PC-9 (cell line): ENCODE measurements at regions of chr7 and their contacts with region 1.

Region 1: DNA sequence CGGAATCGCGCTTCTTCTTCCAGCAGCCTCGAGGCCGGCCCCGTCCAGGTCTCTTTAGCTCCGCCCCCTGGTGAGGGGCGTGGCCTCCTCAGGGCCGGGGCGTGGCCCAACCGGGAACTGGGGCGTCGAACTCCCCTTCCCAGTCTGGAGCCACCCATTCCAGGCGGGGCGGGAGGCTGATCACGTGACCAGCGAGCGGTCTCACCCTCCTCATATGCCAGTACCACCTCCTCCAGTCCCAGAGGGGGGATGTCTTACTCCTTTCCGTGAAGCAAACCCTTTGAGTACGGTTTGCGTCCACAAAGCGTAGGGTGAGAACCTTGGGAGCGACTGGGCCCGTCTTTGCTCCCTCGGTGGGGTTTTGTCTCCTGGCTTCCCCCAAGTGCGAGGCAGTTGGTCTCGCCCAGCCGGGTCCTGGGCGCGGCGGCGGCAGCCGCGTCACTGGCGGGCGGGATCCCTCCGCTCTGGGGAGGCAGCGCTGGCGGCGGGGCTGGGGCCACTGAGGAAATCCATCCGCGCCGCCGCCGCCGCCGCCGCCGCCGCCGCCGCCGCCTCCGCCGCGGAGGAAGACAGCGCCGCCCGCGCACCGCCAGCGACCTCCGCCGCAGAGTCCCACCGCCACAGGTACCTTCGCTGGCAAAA is at the start of gene GNB2:
- DNase-seq: peak; percentile 93 to 100
- H3K4me3 ChIP-seq: peak within 1 kb of the TSS; percentile 99
- H3K27ac ChIP-seq: peak within 1 kb of the TSS; percentile 75
- H3K4me1 ChIP-seq: no peaks in the 10 kb centered on the region; the same call in 1 of the 2 replicates
- H3K27me3 ChIP-seq: no peaks in the 10 kb centered on the region
- CTCF ChIP-seq: no peak
- total RNA-seq, gene GNB2: 299 and 326 TPM in 2 replicates

Region 2: DNA sequence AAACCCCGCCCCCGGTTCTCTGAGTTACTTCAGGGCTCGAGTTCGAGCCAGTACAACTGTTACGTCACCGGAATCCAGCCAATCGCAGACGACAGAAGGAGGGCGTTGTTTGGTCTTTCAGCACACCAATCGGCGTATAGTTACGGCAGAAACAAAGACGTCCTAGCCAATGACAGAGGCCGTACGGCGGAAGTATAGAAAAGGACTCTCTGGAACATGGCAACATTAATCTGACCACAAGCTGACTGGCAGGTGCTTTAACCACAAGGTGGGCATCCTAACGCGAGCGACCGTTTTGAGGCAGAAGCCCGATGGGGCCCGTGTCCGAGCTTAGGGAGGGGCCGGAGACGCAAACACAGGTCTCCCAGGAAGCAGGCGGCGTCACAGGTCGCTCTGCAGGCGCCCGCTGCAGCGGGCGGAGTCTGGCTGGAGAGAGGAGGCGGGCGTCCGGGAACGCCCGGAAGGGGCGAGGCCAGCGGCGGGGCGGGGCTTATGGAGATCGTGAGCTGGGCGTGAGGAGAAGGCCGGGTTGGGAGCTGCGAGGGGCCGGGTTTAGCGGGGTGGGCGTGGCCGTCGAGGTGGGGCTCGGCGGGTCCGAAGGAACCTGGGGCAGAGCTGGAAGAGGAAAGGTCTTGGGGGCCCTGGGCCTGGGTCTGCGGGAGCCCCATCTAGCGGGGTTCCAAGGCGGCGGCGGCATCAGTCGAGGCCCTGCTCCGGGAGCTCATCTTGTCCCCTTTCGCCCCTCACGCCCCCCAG is 61.3 kb before region 1 on chr7 and contains the start of gene MOSPD3:
- CTCF ChIA-PET with region 1: no interaction called
- POLR2A ChIA-PET with region 1: interaction called, 7 read pairs
- intact Hi-C with region 1: loop called (anchors 2 kb)
- DNase-seq: peak; percentile 98 to 99
- H3K4me3 ChIP-seq: peak within 1 kb of the TSS; percentile 74
- H3K27ac ChIP-seq: peak within 1 kb of the TSS; percentile 60
- H3K4me1 ChIP-seq: peaks cover 5% of the 10 kb centered on the region
- H3K27me3 ChIP-seq: no peaks in the 10 kb centered on the region
- CTCF ChIP-seq: no peak
- total RNA-seq, gene MOSPD3: 38.1 and 38.8 TPM in 2 replicates

Region 3: DNA sequence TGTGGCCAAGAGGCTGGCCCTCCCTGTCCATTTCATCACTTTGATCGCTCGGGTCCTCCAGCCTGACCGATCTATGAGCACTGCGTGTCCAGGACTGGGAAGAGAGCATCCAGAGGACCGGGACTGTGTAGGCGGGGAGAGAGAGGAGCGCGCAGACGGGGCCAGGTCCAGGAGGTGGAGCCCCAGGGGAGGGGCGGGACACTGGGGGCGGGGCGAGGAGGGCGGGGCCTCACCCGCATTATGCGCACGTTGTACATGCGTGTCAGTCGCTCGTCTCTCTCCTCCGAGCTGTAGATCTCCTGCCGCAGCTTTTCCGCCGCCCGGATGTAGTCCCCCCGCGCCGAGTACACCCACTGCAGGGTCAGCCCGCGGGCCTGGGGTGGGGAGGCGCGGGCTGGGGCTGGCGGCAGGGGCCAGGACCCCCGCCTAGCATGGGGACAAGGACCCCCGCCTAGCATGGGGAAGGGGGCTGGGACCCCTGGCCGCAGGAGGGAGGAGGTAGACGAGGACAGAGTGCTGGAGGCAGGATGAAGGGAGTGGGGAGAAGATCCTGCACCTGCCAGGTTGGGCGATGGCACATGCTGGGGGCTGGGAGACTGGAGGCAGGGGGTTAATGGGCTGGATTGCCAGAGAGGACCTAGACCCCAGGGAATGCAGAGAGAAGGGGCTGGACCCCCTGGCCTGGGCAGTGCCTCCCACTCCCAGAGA is 46.7 kb before region 1 on chr7:
- CTCF ChIA-PET with region 1: no interaction called
- POLR2A ChIA-PET with region 1: interaction called, 3 read pairs
- intact Hi-C with region 1: loop called (anchors 5 kb)
- DNase-seq: peak; percentile 62 to 80
- H3K4me3 ChIP-seq: peak overlapping the region; percentile 62
- H3K27ac ChIP-seq: no peak overlapping the region
- H3K4me1 ChIP-seq: peaks cover 9% of the 10 kb centered on the region; the same call in 1 of the 2 replicates
- H3K27me3 ChIP-seq: no peaks in the 10 kb centered on the region
- CTCF ChIP-seq: no peak